ENCODE measurements at regions of chr10 and their contacts with region 1.

Region 1: DNA sequence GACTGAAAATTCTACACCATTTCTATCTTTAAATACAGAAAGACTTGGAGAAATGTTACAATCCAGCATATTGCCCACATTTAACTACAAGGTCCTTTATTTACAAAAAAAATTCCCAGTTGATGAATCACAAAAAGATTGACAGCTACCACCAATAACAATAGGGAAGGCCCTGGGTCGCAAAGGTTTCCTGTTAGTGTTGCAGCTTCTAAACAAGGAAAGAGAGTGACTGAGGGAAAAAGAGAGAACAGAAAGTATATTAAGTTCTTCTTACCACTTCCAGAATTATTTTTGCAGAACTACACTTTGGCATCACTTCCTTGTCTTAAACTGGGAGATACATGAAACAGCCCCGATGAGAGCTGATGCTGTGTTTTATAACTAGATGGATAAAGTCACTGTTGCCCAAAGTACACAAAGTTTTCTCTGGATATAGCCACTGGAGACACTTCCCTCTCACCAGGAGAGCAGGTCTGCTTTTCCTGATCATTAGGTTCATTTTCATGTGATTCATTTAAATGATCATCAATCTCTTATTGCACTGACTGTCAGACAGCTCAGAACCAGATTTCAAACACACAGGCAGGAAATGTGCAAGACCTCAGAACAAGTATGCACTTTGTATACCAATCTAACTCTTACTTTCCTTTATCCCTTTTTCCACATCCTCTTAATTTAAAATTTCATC is 57.0 kb downstream of the SHTN1 start:
- DNase-seq: peak; percentile 81
- ATAC-seq: peak; percentile 86
- H3K4me3 ChIP-seq: peak overlapping the region; percentile 58
- H3K27ac ChIP-seq: peak overlapping the region; percentile 79
- H3K4me1 ChIP-seq: peaks cover 22% of the 10 kb centered on the region
- H3K27me3 ChIP-seq: no peaks in the 10 kb centered on the region
- CTCF ChIP-seq: no peak

Region 2: DNA sequence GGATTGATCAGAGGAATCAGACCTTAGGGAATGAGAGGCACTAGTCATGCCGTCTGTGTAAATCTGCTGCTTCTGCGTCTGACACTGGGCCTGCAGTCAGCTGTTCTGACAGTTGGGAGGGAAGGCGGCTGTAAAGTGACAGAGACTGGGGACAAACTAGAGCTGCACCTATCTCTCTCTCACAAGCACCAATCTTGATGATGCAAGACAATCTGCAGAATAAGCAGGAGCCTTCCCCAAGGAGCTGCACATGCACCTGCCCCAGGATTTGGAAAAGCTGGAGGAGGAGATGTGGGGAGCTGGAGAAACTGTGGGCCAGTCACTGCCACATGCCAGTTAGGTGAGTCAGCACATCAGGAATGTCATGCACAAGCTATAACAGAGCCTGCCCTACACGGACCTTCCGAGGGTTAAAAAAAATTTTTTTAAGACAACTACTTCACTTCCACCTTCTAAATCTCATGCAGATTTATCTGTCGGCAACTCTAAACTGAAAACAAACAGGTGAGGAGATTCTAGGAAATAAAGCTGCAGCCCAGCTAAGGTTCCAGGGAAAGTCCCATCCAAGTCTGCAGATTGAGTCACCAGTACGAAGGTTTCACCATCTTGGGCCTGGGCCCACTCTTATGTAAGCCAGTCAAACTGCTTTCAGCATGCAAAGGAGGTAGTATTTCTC is 59.5 kb before region 1 on chr10:
- CTCF ChIA-PET with region 1: no interaction called
- POLR2A ChIA-PET with region 1: no interaction called
- intact Hi-C with region 1: loop called (anchors 1 kb)
- DNase-seq: peak; percentile 82
- ATAC-seq: peak; percentile 83
- H3K4me3 ChIP-seq: no peak overlapping the region
- H3K27ac ChIP-seq: peak overlapping the region; percentile 80
- H3K4me1 ChIP-seq: peaks cover 62% of the 10 kb centered on the region
- H3K27me3 ChIP-seq: no peaks in the 10 kb centered on the region
- CTCF ChIP-seq: no peak

Measured in PC-3 (cell line).